ENCODE measurements at regions of chr1 and their contacts with region 1.

Region 1: DNA sequence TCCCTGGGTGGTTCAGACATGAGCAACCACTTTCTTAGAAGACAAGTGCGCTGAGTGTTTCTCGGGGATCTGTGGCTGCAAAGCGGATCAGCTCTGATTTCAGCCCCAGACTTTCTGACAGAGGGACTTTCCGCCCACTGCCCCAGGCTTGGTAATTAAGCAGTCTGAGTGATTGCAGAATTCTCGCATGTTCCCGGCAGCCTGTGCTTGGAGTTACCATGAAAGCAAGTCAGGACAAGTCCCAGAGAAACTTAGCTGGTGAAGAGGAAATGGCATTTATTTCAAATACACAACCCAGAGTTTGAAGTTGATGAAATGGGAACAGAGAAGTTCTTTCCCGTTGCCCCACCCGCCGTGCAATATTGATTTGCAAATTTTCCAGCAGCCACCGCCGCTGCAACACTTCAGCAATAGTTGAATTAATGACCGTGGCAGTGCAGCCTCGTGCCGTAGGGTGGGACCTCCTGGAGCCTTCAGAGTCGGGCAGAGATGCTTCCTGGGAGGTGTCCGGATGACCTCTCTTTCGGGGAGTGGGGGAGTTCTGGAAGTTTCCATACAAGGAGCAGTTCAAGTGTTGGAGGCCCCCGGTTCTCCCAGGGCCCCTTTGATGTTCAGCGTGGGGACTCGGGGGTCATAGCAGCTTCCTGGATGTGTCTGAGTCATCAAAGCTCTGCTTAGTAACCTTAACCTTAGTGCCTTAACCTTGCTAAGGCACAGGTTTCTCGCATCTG is 134.7 kb downstream of the KAZN start:
- DNase-seq: no peak
- H3K4me3 ChIP-seq: no peak overlapping the region
- H3K27ac ChIP-seq: no peak overlapping the region
- H3K4me1 ChIP-seq: no peaks in the 10 kb centered on the region
- H3K27me3 ChIP-seq: no peaks in the 10 kb centered on the region
- CTCF ChIP-seq: no peak

Region 2: DNA sequence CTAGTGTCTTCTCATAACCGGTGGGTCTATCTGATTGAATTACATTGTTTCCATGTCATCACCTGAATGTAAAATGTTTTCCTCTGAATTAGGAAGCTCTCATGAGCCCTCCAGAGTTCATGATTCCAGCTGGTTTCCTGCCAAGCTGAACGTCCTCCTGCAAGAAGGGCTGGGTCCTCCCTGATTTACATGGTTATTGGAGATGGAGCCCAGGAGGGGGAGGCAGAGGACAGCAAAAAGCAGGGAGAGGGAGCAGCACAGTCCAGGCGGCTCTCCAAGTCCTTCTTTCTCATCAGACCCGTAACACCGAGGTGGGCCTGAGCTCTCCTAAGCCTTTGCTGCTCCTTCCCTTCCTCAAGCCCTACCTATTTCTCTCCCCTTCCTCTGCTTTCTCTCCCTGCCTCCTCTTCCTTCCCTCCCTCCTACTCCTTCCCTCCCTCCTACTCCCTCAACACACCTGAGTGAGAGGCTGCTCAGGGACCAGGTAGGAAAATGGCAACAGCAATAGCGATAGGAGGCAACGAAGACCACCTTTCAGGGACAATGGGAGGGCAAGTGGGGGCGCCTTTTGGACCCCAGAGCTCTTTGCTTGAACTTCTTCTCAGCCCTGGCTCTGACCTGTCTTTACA is 767.3 kb before region 1 on chr1:
- intact Hi-C with region 1: loop called (anchors 5 kb)
- DNase-seq: peak; percentile 40
- H3K4me3 ChIP-seq: no peak overlapping the region
- H3K27ac ChIP-seq: no peak overlapping the region
- H3K4me1 ChIP-seq: no peaks in the 10 kb centered on the region
- H3K27me3 ChIP-seq: no peaks in the 10 kb centered on the region
- CTCF ChIP-seq: no peak

Region 3: GRCh38 chr1:14598497-14599172 is 134.6 kb before region 1 on chr1 and contains the start of gene KAZN:
- intact Hi-C with region 1: no loop called
- DNase-seq: peak; percentile 18
- H3K4me3 ChIP-seq: peak within 1 kb of the TSS; percentile 30
- H3K27ac ChIP-seq: no peak within 1 kb of the TSS
- H3K4me1 ChIP-seq: no peaks in the 10 kb centered on the region
- H3K27me3 ChIP-seq: peaks cover 31% of the 10 kb centered on the region
- CTCF ChIP-seq: no peak
- total RNA-seq, gene KAZN: 9.8 to 12.2 TPM

Region 4: DNA sequence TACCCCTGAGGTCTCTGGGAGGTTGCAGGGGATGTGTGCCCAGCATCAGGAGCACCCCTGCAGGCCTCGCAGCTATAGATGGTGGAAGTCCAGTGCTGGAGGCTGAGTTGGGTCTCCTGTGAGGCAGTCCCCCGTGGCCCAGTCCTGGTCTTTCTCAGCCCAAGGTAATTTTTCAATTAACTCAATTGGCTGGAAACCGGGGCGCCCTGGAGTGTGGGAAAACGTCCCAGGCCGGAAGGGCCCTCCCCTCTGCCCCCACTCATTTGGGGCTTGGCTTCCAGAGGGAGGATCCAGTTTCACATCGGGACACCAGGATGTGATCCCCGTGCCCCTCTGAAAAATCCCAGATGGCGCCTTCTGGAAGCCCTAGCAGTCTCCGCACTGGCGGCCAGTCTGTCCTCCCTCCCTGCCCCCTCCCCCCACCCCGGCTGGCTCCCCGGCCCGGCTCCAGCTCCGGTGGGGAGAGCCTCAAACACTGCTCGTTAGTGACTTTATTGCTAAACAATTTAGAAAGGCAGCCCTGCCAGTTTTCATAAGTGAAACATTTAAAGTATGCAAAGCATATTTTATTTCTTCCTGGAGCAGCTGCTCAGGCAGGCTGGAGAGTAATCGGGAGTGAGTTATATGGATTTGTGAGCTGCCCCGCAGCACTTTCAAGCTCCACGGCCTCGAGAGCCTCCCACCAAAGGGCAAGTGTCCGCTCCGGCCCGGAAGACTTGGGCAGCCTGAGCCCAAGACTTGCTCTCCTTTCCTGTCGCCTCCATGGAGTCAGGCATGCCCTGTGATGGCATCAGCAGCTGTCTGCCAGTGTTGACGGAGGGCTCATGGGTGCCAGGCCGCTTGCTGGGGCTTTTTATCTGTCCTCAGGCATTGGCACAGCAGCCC is 212.2 kb after region 1 on chr1:
- intact Hi-C with region 1: no loop called
- DNase-seq: peak; percentile 43
- H3K4me3 ChIP-seq: no peak overlapping the region
- H3K27ac ChIP-seq: peak overlapping the region; percentile 86
- H3K4me1 ChIP-seq: peaks cover 12% of the 10 kb centered on the region
- H3K27me3 ChIP-seq: no peaks in the 10 kb centered on the region
- CTCF ChIP-seq: no peak

Region 5: GRCh38 chr1:14970115-14970798 is 237.0 kb after region 1 on chr1:
- intact Hi-C with region 1: no loop called
- DNase-seq: peak; percentile 52
- H3K4me3 ChIP-seq: no peak overlapping the region
- H3K27ac ChIP-seq: no peak overlapping the region
- H3K4me1 ChIP-seq: no peaks in the 10 kb centered on the region
- H3K27me3 ChIP-seq: no peaks in the 10 kb centered on the region
- CTCF ChIP-seq: no peak

Measured in colonic mucosa (tissue), 4 donors.